ENCODE measurements at regions of chr7 and their contacts with region 1.

Region 1: GRCh38 chr7:109111086-109111485 is 541.4 kb downstream of the DNAJB9 start:
- DNase-seq: no peak
- ATAC-seq: no peak
- H3K4me3 ChIP-seq: no peak overlapping the region
- H3K27ac ChIP-seq: no peak overlapping the region
- H3K4me1 ChIP-seq: no peaks in the 10 kb centered on the region
- H3K27me3 ChIP-seq: no peaks in the 10 kb centered on the region
- CTCF ChIP-seq: no peak

Region 2: DNA sequence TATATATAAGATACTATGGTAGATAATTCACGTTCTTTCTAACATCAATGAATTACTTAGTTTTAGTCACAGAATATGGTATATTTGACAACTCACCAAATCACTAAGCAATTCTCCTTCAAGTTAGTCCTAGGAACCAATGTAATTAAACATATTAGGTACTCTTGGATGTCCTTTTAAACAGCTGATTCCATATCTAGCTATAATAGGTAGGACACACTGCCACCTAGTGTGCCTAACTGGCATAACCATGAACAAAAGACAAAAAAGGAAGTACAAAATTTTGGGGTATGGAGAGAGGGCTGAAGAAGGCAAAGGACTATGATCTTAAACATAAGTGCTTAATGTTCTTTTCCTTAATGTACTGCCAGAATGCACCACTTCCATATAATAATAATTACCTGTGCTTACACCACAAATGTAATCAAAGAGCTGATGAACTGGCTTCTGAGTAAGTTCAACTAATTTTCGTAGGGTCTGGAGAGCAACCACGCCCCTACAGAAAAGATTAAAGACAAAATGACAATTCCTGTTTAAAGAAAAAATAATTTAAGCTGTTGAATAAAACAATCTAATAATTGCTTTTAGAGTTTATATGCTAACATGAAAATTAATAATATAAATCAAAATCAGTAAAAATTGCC is 613.9 kb before region 1 on chr7:
- CTCF ChIA-PET with region 1: interaction called, 17 read pairs
- POLR2A ChIA-PET with region 1: no interaction called
- in situ Hi-C with region 1: no loop called
- intact Hi-C with region 1: no loop called
- DNase-seq: peak; percentile 47
- ATAC-seq: peak; percentile 62
- H3K4me3 ChIP-seq: no peak overlapping the region
- H3K27ac ChIP-seq: no peak overlapping the region
- H3K4me1 ChIP-seq: no peaks in the 10 kb centered on the region
- H3K27me3 ChIP-seq: no peaks in the 10 kb centered on the region
- CTCF ChIP-seq: peak; percentile 81; the same call in 1 of the 2 replicates

Measured in Panc1 (cell line).